Calu3 (cell line): ENCODE measurements at regions of chr4 and their contacts with region 1.

Region 1: DNA sequence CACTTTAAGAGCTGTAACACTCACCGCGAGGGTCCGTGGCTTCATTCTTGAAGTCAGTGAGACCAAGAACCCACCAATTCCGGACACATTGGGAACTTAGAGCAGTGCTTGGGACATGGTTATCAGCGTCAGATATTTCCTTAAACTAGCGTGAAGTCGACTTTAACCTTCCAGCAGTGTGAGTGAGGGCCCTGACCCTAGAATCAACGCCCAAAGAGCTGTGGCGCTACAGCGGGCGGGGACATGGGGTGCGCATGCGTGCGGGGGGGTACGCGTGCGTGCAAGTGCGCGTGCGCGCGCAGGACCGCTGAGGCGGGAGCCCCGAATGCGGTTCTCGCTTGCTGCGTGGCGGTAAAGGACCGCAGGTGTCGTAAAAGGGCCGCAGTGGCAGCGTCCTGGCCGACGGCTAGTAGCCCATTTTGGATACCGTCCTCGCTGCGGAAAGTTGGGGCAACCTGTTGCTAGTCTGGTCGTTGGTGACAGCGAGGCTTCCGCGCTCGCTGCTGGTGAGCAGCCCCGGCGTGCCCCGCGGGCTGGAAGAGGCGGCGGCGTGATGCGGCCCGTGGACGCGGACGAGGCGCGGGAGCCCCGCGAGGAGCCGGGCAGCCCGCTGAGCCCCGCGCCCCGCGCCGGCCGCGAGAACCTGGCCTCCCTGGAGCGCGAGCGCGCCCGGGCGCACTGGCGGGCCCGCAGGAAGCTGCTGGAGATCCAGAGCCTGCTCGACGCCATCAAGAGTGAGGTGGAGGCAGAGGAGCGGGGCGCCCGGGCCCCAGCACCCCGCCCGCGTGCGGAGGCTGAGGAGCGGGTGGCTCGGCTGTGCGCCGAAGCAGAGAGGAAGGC is 19.8 kb upstream of the S100P start:
- DNase-seq: peak; percentile 87
- H3K4me3 Mint-ChIP-seq: peak overlapping the region; percentile 87
- H3K27ac Mint-ChIP-seq: peak overlapping the region; percentile 47
- H3K4me1 Mint-ChIP-seq: peaks cover 23% of the 10 kb centered on the region
- H3K27me3 Mint-ChIP-seq: no peaks in the 10 kb centered on the region
- CTCF ChIP-seq: no peak

Region 2: GRCh38 chr4:6362896-6363295 is 311.0 kb before region 1 on chr4:
- CTCF ChIA-PET with region 1: no interaction called
- intact Hi-C with region 1: no loop called
- DNase-seq: no peak
- H3K4me3 Mint-ChIP-seq: no peak overlapping the region
- H3K27ac Mint-ChIP-seq: no peak overlapping the region
- H3K4me1 Mint-ChIP-seq: no peaks in the 10 kb centered on the region
- H3K27me3 Mint-ChIP-seq: no peaks in the 10 kb centered on the region
- CTCF ChIP-seq: no peak

Region 3: DNA sequence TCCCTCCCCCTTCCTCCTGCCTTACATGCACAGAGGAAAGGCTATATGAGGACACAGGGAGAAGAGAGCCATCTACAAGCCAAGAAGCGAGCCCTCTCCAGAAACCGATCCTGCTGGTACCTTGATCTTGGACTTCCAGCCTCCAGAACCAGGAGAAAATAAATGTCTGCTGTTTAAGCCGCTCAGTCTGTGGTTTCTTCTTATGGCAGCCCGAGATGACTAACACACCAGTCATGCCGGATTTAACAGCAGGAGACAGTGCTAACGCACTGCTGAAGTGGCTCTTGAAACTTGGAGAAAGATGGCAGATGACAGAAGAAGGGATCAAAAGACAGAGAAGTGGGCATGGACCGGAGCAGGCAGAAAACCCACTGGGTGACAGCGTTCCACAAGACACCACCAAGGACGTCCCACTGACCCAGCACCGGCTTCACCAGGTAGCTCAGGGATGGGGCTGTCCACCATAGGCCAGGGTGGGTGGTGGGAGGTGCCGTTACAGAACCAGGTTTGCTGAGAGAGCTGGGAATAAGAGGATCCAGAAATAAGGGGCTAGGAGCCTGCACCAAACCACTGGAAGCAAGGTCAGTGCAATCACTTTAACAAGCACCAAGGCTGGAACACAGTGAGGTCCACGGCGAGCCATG is 105.1 kb before region 1 on chr4:
- CTCF ChIA-PET with region 1: no interaction called
- intact Hi-C with region 1: no loop called
- DNase-seq: no peak
- H3K4me3 Mint-ChIP-seq: no peak overlapping the region
- H3K27ac Mint-ChIP-seq: no peak overlapping the region
- H3K4me1 Mint-ChIP-seq: peaks cover 9% of the 10 kb centered on the region
- H3K27me3 Mint-ChIP-seq: peaks cover 81% of the 10 kb centered on the region
- CTCF ChIP-seq: no peak

Region 4: DNA sequence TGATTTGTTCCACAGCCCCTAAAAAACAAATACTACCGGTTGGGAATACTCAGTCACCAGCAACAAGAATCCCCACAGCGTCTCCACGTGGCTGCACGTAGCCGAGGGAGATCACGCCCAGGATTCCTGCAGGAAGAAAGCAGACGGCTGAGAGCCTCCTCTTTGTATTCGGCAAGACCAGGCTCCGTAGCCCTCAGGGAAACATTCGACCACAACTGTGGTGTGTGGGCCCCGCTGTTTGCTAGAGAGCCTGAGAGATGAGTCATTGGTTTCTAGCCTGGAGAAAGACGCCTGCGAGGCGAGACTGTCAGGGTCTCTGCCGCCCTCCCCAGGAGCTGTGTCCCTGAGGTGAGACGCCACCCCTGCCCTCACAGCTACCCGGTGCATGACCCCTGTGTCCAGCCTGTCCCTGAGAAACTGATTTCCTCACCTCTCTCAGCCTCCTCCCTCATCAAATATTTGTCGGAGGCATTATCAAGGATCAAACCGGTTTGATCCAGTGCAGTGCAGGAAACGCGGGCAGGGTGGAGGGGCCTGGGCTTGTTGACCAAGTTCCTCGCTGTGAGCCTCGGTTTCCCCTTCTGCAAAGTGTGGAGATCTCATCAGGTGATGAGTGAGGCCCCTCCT is 15.1 kb after region 1 on chr4:
- CTCF ChIA-PET with region 1: interaction called, 26 read pairs
- intact Hi-C with region 1: loop called (anchors 2 kb)
- DNase-seq: peak; percentile 78
- H3K4me3 Mint-ChIP-seq: peak overlapping the region; percentile 60
- H3K27ac Mint-ChIP-seq: peak overlapping the region; percentile 96
- H3K4me1 Mint-ChIP-seq: peaks cover 38% of the 10 kb centered on the region
- H3K27me3 Mint-ChIP-seq: no peaks in the 10 kb centered on the region
- CTCF ChIP-seq: no peak

Region 5: DNA sequence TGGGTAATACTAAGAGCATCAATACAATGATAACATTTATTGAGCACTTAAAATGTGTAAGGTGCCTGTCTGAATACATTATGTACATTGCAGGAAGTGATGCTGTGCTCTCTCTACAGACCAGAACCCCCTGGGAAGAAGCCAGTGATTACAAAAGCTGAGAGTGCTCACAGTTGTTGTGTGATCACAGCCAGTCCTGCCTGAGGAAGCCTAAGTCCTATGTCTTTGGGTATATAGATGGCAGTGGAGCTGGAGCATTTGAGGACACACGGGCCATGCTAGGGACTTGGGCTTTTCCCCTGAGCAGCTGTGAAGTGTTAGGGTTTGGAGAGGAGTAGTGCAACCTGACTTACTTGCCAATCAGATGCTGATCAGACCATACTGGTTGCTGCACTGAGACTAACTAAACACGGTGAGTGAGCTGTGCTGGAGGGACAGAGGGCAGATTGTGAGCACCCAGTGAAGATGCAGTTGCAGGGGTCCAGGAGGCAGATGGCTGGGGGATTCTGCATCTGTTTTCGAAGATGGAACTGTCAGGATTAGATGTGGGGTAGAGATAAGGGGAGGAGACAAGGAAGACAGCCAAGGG is 174.9 kb after region 1 on chr4:
- CTCF ChIA-PET with region 1: no interaction called
- intact Hi-C with region 1: no loop called
- DNase-seq: no peak
- H3K4me3 Mint-ChIP-seq: no peak overlapping the region
- H3K27ac Mint-ChIP-seq: no peak overlapping the region
- H3K4me1 Mint-ChIP-seq: peaks cover 12% of the 10 kb centered on the region
- H3K27me3 Mint-ChIP-seq: no peaks in the 10 kb centered on the region
- CTCF ChIP-seq: no peak